ENCODE measurements at regions of chr19 and their contacts with region 1.

Region 1: DNA sequence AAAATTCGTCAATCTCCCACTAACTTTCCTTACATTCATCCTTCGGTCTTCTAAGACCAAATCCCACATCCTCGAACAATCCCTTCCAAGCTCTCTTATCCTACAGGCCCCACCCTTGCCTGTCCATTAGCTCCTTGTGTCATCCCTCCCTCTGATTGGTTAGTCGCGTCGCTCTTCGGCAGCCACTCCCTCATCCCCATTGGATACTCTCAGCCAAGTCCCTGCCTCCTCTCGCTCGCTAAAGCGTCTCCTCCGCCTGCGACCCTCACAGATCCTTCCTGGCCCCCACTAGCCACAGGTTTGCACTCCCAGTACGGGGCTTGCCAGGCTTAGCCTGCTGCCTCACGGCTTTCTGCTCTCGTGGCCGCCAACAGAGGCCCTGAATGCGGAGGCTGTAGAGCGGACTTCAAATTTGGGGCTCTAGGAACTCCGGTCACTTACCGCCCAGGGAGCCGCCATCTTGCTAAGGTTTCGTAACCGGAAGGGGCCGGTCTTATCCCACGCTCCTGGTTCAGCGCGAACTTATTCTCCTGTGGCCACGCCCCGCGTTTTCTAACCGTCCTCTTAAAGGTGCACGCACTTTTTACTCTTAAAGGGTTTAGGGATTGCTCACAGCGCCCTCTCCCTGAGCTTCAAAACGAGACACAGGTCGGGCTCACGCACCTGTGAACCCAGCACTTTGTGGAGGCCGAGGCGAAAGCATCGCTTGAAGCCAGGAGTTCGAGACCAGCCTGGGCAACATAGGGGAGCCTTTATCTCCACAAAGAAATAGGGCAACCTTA is at the start of gene DMAC2:
- DNase-seq: peak; percentile 98
- ATAC-seq: peak; percentile 98
- H3K4me3 ChIP-seq: peak within 1 kb of the TSS; percentile 43 to 45
- H3K27ac ChIP-seq: peak within 1 kb of the TSS in 1 of 2 donors; percentile 99
- H3K4me1 ChIP-seq: no peaks in the 10 kb centered on the region
- H3K27me3 ChIP-seq: no peaks in the 10 kb centered on the region
- total RNA-seq, gene DMAC2: 28.3 to 31.5 TPM

Region 2: GRCh38 chr19:41397086-41398049 is 42.3 kb before region 1 on chr19 and contains the starts of genes BCKDHA and EXOSC5:
- intact Hi-C with region 1: loop called in 1 of 2 experiments (anchors 5 kb)
- DNase-seq: peak; percentile 99 to 100
- ATAC-seq: peak; percentile 100
- H3K4me3 ChIP-seq: peak within 1 kb of the TSS; percentile 35 to 93
- H3K27ac ChIP-seq: peak within 1 kb of the TSS in 1 of 2 donors; percentile 43
- H3K4me1 ChIP-seq: no peaks in the 10 kb centered on the region
- H3K27me3 ChIP-seq: no peaks in the 10 kb centered on the region
- total RNA-seq, gene BCKDHA: 11.6 to 15.2 TPM
- total RNA-seq, gene EXOSC5: 5.5 to 8.7 TPM

Region 3: GRCh38 chr19:41409288-41409687 is 30.3 kb before region 1 on chr19:
- intact Hi-C with region 1: no loop called
- DNase-seq: no peak
- ATAC-seq: no peak
- H3K4me3 ChIP-seq: no peak overlapping the region
- H3K27ac ChIP-seq: peak overlapping the region in 1 of 2 donors; percentile 32
- H3K4me1 ChIP-seq: peaks cover 0 to 6% of the 10 kb centered on the region in 2 donors
- H3K27me3 ChIP-seq: no peaks in the 10 kb centered on the region